ENCODE measurements at regions of chr11 and their contacts with region 1.

Region 1: GRCh38 chr11:62753736-62754603 is at the start of gene ZBTB3:
- DNase-seq: peak; percentile 97
- ATAC-seq: peak; percentile 91
- H3K4me3 Mint-ChIP-seq: peak within 1 kb of the TSS; percentile 95
- H3K27ac Mint-ChIP-seq: peak within 1 kb of the TSS; percentile 99
- H3K4me1 Mint-ChIP-seq: peaks cover 28% of the 10 kb centered on the region
- H3K27me3 Mint-ChIP-seq: no peaks in the 10 kb centered on the region; the same call in 1 of the 2 replicates
- CTCF ChIP-seq: no peak
- total RNA-seq, gene ZBTB3: 82.3 to 88.1 TPM (median 88.0 TPM) in 3 replicates

Region 2: GRCh38 chr11:62370743-62371440 is 383.1 kb before region 1 on chr11:
- CTCF ChIA-PET with region 1: no interaction called
- POLR2A ChIA-PET with region 1: no interaction called
- DNase-seq: peak; percentile 40
- ATAC-seq: peak; percentile 88
- H3K4me3 Mint-ChIP-seq: no peak overlapping the region
- H3K27ac Mint-ChIP-seq: no peak overlapping the region
- H3K4me1 Mint-ChIP-seq: peaks cover 2% of the 10 kb centered on the region; the same call in 1 of the 2 replicates
- H3K27me3 Mint-ChIP-seq: no peaks in the 10 kb centered on the region
- CTCF ChIP-seq: no peak

Region 3: GRCh38 chr11:62645956-62646824 is 107.8 kb before region 1 on chr11 and contains the start of gene GANAB:
- CTCF ChIA-PET with region 1: interaction called, 3 read pairs
- POLR2A ChIA-PET with region 1: interaction called, 12 read pairs
- DNase-seq: peak; percentile 99
- ATAC-seq: peak; percentile 98
- H3K4me3 Mint-ChIP-seq: peak within 1 kb of the TSS; percentile 99
- H3K27ac Mint-ChIP-seq: peak within 1 kb of the TSS; percentile 96
- H3K4me1 Mint-ChIP-seq: peaks cover 10% of the 10 kb centered on the region
- H3K27me3 Mint-ChIP-seq: no peaks in the 10 kb centered on the region
- CTCF ChIP-seq: no peak
- total RNA-seq, gene GANAB: 323 to 350 TPM (median 327 TPM) in 3 replicates

Region 4: DNA sequence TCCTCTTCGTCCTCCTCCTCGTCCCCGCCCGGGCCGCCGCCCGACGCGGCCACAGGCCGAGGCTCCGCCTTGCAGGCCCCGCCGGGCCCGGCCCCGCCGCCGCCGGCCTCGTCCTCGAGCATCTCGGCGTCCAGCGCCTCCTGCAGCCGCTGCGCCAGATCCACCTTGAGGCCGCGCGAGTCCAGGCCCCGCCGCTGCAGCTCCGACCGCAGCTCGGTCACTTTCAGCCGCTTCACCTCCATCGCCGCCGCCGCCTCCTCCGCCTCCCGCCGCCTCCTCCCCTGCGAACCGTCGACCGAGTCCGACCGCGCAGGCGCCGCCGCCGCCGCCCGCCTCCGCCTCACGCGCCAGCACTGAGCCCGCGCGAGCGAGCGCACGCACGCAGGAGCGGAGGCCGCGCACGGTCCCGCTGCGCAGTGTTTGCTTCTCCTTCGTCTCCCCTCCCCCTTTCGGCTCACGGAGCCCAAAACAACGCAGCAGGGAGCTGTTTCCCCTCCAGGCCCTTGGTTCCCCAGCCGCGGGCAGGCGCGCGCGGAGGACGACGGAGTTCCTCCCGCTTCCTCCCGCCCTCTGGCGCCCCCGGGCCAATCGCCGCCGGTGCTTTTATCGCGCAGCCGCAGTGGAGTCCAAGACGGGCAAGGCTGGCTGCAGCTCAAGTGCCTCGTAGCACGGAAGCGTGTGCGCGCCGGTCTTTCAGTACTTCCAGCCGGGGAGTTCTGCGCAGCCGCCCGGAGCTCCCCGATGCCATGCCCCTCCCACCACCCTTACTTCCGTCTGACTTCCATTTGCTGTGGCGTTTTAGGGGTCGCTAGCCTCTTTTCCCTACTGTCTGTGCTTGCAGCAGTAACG is 26.8 kb before region 1 on chr11 and contains the start of gene HNRNPUL2:
- CTCF ChIA-PET with region 1: interaction called, 32 read pairs
- POLR2A ChIA-PET with region 1: interaction called, 30 read pairs
- DNase-seq: peak; percentile 98
- ATAC-seq: peak; percentile 89
- H3K4me3 Mint-ChIP-seq: peak within 1 kb of the TSS; percentile 98
- H3K27ac Mint-ChIP-seq: peak within 1 kb of the TSS; percentile 100
- H3K4me1 Mint-ChIP-seq: peaks cover 25% of the 10 kb centered on the region
- H3K27me3 Mint-ChIP-seq: peaks cover 4% of the 10 kb centered on the region; the same call in 1 of the 2 replicates
- CTCF ChIP-seq: no peak
- total RNA-seq, gene HNRNPUL2: 42.1 to 42.9 TPM (median 42.2 TPM) in 3 replicates

Measured in WTC11 (cell line).